ENCODE measurements at regions of chr2 and their contacts with region 1.

Region 1: GRCh38 chr2:86790676-86791572 is at the start of gene CD8A:
- DNase-seq: peak; percentile 86
- ATAC-seq: peak; percentile 34
- H3K4me3 Mint-ChIP-seq: peak within 1 kb of the TSS; percentile 93
- H3K27ac Mint-ChIP-seq: peak within 1 kb of the TSS; percentile 99
- H3K4me1 Mint-ChIP-seq: peaks cover 55% of the 10 kb centered on the region
- H3K27me3 Mint-ChIP-seq: no peaks in the 10 kb centered on the region
- total RNA-seq, gene CD8A: 666 to 683 TPM

Region 2: GRCh38 chr2:86648696-86649095 is 142.2 kb before region 1 on chr2:
- POLR2A ChIA-PET with region 1: no interaction called
- DNase-seq: no peak
- ATAC-seq: no peak
- H3K4me3 Mint-ChIP-seq: no peak overlapping the region
- H3K27ac Mint-ChIP-seq: no peak overlapping the region
- H3K4me1 Mint-ChIP-seq: no peaks in the 10 kb centered on the region
- H3K27me3 Mint-ChIP-seq: no peaks in the 10 kb centered on the region

Region 3: GRCh38 chr2:86808315-86809161 is 17.6 kb after region 1 on chr2:
- POLR2A ChIA-PET with region 1: interaction called, 755 read pairs
- DNase-seq: peak; percentile 98
- ATAC-seq: peak; percentile 74
- H3K4me3 Mint-ChIP-seq: peak overlapping the region; percentile 93
- H3K27ac Mint-ChIP-seq: peak overlapping the region; percentile 99
- H3K4me1 Mint-ChIP-seq: peaks cover 55% of the 10 kb centered on the region
- H3K27me3 Mint-ChIP-seq: no peaks in the 10 kb centered on the region

Region 4: GRCh38 chr2:86831537-86831936 is 40.6 kb after region 1 on chr2:
- POLR2A ChIA-PET with region 1: interaction called, 145 read pairs
- DNase-seq: no peak
- ATAC-seq: no peak
- H3K4me3 Mint-ChIP-seq: peak overlapping the region; percentile 68
- H3K27ac Mint-ChIP-seq: peak overlapping the region; percentile 82
- H3K4me1 Mint-ChIP-seq: peaks cover 65% of the 10 kb centered on the region
- H3K27me3 Mint-ChIP-seq: no peaks in the 10 kb centered on the region

Measured in activated naive CD8-positive, alpha-beta T cell treated with anti-CD3 and anti-CD28 coated beads, Interleukin-2, amount 10 ng/mL, durations not matched to agents 7 days and 5 days (primary cell).